Head of caudate nucleus (tissue), 42 donors: ENCODE measurements at regions of chr1 and their contacts with region 1.

Region 1: DNA sequence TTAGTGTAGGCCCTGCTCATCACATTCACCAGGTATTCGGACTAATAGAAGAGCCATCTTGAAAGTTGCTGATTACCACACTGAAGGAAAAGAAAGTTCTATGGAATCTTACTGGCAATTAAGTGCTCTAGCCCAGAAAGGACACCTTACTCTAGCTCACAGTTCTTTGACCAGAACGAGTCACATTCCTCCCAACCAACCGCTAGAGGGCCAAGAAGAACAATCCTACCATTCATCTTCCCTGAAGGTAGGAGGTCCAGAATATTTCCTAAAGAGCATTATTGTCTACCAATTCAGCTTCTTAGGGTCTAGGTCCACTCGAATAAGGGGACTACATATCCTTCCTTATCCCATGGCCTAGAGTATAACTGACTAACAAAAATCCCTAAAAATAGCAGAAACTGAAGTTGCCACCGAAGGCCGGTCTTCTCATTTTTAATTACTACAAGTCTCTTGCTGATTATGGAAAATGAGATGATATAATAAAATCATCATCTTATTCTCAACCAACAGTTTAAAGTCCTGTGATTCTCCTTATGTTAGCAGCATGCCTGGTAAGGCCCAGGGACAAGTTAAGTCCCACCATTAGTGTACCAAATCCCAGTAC is 2.7 kb upstream of the FMO1 start:
- DNase-seq: peak in 19 of 42 donors; percentile 12 to 65 (median 31)

Region 2: GRCh38 chr1:171313835-171314320 is 68.3 kb after region 1 on chr1 and contains the start of gene FMO4:
- intact Hi-C with region 1: loop called (anchors 10 kb)
- DNase-seq: peak; percentile 7 to 92 (median 82)